Activated B cell treated with CpG ODN at 0.5 μM for 24 hours (primary cell): ENCODE measurements at regions of chr12 and their contacts with region 1.

Region 1: GRCh38 chr12:116880817-116881324 is 370 bp downstream of the HRK start:
- DNase-seq: peak; percentile 53
- ATAC-seq: peak; percentile 80
- H3K4me3 Mint-ChIP-seq: peak overlapping the region; percentile 85
- H3K27ac Mint-ChIP-seq: peak overlapping the region; percentile 77
- H3K4me1 Mint-ChIP-seq: peaks cover 45% of the 10 kb centered on the region
- H3K27me3 Mint-ChIP-seq: peaks cover 35% of the 10 kb centered on the region
- CTCF ChIP-seq: no peak

Region 2: GRCh38 chr12:116609319-116610114 is 271.4 kb before region 1 on chr12:
- CTCF ChIA-PET with region 1: no interaction called
- POLR2A ChIA-PET with region 1: no interaction called
- intact Hi-C with region 1: no loop called
- DNase-seq: no peak
- ATAC-seq: peak; percentile 61
- H3K4me3 Mint-ChIP-seq: no peak overlapping the region
- H3K27ac Mint-ChIP-seq: no peak overlapping the region
- H3K4me1 Mint-ChIP-seq: peaks cover 19% of the 10 kb centered on the region
- H3K27me3 Mint-ChIP-seq: peaks cover 8% of the 10 kb centered on the region
- CTCF ChIP-seq: no peak

Region 3: DNA sequence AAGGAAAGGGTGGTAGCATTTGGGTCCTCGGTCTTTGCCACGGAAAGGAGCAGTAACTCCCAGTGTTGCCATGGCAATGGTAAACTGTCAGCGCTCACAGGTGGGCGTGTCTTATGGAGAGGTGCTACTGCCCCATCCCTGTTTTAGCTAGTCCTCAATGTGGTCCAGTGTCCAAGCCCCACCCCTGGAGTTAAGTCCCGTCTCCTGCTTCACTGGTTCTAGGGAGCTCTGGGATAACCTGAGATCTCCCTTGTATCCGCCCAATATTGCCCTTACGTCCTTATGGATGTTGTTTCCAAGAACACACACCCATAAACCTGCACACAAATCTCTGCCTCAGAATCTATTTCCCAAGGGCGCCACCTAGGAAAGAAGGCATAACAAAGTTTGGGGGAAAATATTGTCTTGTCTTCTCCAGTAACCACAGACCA is 207.2 kb before region 1 on chr12:
- CTCF ChIA-PET with region 1: no interaction called
- POLR2A ChIA-PET with region 1: no interaction called
- intact Hi-C with region 1: no loop called
- DNase-seq: no peak
- ATAC-seq: no peak
- H3K4me3 Mint-ChIP-seq: peak overlapping the region; percentile 13
- H3K27ac Mint-ChIP-seq: no peak overlapping the region
- H3K4me1 Mint-ChIP-seq: peaks cover 70% of the 10 kb centered on the region
- H3K27me3 Mint-ChIP-seq: no peaks in the 10 kb centered on the region
- CTCF ChIP-seq: no peak

Region 4: GRCh38 chr12:116759783-116760621 is 120.9 kb before region 1 on chr12:
- CTCF ChIA-PET with region 1: interaction called, 7 read pairs
- POLR2A ChIA-PET with region 1: no interaction called
- intact Hi-C with region 1: loop called (anchors 5 kb)
- DNase-seq: no peak
- ATAC-seq: peak; percentile 37
- H3K4me3 Mint-ChIP-seq: peak overlapping the region; percentile 66
- H3K27ac Mint-ChIP-seq: no peak overlapping the region
- H3K4me1 Mint-ChIP-seq: peaks cover 5% of the 10 kb centered on the region
- H3K27me3 Mint-ChIP-seq: no peaks in the 10 kb centered on the region
- CTCF ChIP-seq: no peak

Region 5: DNA sequence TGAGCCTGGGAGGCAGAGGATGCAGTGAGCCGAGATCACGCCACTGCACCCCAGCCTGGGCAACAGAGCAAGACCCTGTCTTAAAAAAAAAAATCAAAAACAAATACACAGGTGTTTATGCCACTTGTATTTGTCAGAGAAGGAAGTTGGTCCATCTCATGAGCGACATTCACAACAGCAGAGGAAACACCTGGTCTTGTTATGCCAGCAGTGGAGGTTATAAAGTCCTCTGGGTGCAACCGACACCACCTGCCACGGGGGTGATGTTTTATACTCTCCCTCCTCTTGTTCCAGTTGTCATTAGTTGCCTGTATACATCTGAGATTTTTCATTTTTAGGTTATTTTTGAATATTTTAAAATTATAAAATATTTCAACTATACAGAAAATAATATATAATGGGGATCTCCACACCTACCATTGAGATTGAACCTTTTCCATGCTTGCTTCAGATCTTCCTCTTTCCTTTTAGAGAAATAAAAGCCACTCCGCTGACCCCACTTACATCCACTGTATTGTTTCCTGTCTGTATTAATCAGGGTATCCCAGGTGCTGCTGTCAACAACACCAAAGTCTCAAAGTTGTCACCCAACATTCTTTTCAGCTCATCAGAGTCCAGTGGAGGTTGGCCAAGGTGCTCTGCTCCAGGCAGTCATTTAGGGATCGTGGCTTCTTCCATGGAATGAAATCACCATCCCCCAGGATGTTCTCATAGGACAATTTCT is 77.7 kb before region 1 on chr12:
- CTCF ChIA-PET with region 1: no interaction called
- POLR2A ChIA-PET with region 1: interaction called, 4 read pairs
- intact Hi-C with region 1: loop called (anchors 5 kb)
- DNase-seq: no peak
- ATAC-seq: peak; percentile 81
- H3K4me3 Mint-ChIP-seq: peak overlapping the region; percentile 21
- H3K27ac Mint-ChIP-seq: peak overlapping the region; percentile 79
- H3K4me1 Mint-ChIP-seq: peaks cover 56% of the 10 kb centered on the region
- H3K27me3 Mint-ChIP-seq: no peaks in the 10 kb centered on the region
- CTCF ChIP-seq: no peak

Region 6: GRCh38 chr12:116861320-116861719 is 19.6 kb before region 1 on chr12:
- CTCF ChIA-PET with region 1: interaction called, 5 read pairs
- POLR2A ChIA-PET with region 1: interaction called, 18 read pairs
- intact Hi-C with region 1: loop called (anchors 1 kb)
- DNase-seq: peak; percentile 44
- ATAC-seq: peak; percentile 72
- H3K4me3 Mint-ChIP-seq: peak overlapping the region; percentile 47
- H3K27ac Mint-ChIP-seq: peak overlapping the region; percentile 81
- H3K4me1 Mint-ChIP-seq: peaks cover 74% of the 10 kb centered on the region
- H3K27me3 Mint-ChIP-seq: no peaks in the 10 kb centered on the region
- CTCF ChIP-seq: no peak

Region 7: DNA sequence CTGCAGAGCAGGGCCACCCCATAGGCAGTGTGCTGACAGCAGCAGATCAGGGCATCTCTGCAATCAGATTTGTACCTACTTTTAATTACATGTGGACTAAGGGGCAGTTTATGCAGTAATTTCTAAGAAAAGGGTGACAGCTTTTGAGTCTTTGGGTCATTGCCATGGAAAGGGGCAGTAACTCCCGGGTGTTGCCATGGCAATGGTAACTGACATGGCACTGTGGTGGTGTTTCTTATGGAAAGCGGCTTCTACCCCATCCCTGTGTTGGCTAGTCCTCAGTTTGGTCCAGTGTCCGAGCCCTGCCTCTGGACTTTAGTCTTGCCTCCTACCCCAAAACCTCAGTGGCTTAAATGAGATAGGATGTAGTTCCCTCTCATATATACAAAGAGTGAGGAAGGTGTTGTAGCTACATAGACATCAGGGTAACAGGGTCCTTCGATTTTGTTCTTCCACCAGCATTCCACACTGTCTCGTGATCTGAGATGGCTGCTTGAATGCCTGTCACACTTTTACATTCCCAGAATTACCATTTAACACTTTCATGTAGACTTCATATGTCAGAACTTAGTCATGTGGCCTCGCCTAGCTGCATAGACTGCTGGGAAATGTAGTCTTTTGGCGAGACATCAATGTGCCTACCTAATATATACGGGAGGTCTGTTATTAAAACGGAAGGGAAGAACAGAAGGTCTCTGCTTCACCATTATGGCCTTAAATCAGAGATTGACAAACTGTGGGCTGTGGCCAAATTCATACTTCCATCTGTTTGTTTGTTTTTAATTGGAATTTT is 11.3 kb after region 1 on chr12:
- CTCF ChIA-PET with region 1: no interaction called
- POLR2A ChIA-PET with region 1: no interaction called
- intact Hi-C with region 1: no loop called
- DNase-seq: no peak
- ATAC-seq: no peak
- H3K4me3 Mint-ChIP-seq: no peak overlapping the region
- H3K27ac Mint-ChIP-seq: no peak overlapping the region
- H3K4me1 Mint-ChIP-seq: no peaks in the 10 kb centered on the region
- H3K27me3 Mint-ChIP-seq: peaks cover 14% of the 10 kb centered on the region
- CTCF ChIP-seq: no peak